Panc1 (cell line): ENCODE measurements at regions of chr3 and their contacts with region 1.

Region 1: GRCh38 chr3:185460719-185461350 is 38.0 kb downstream of the TMEM41A start:
- DNase-seq: peak; percentile 32
- ATAC-seq: peak; percentile 74
- H3K4me3 ChIP-seq: no peak overlapping the region
- H3K27ac ChIP-seq: no peak overlapping the region
- H3K4me1 ChIP-seq: no peaks in the 10 kb centered on the region
- H3K27me3 ChIP-seq: no peaks in the 10 kb centered on the region
- CTCF ChIP-seq: peak; percentile 75

Region 2: GRCh38 chr3:185362850-185363661 is 97.8 kb before region 1 on chr3 and contains the start of gene MAP3K13:
- CTCF ChIA-PET with region 1: no interaction called
- POLR2A ChIA-PET with region 1: interaction called, 10 read pairs
- in situ Hi-C with region 1: no loop called
- intact Hi-C with region 1: no loop called
- DNase-seq: no peak
- ATAC-seq: peak; percentile 98
- H3K4me3 ChIP-seq: peak within 1 kb of the TSS; percentile 44 to 63
- H3K27ac ChIP-seq: peak within 1 kb of the TSS; percentile 10; the same call in 1 of the 2 replicates
- H3K4me1 ChIP-seq: no peaks in the 10 kb centered on the region
- H3K27me3 ChIP-seq: peaks cover 4% of the 10 kb centered on the region; the same call in 1 of the 2 replicates
- CTCF ChIP-seq: no peak
- total RNA-seq, gene MAP3K13: 26.6 TPM

Region 3: DNA sequence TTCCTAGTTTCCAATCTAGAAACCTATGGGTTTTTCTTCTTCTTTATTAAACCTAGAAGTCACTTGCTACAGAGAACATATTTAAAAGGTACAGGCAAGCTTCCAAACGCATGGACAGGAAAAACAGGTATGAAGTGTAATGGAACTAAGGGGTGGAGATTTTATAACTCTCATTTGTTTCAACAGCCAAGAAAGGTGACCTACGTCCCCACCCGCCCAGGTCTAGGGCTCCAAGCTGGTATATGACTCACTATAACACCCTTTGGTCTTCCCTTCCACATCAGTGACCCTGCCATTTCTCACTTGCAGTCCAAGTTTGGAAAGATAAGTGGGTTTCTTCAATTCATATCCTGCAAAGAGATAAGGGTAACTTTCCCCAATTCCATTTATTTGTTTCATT is 97.6 kb after region 1 on chr3:
- CTCF ChIA-PET with region 1: interaction called, 13 read pairs
- POLR2A ChIA-PET with region 1: no interaction called
- in situ Hi-C with region 1: no loop called
- intact Hi-C with region 1: loop called (anchors 10 kb)
- DNase-seq: no peak
- ATAC-seq: no peak
- H3K4me3 ChIP-seq: no peak overlapping the region
- H3K27ac ChIP-seq: peak overlapping the region; percentile 67; the same call in 1 of the 2 replicates
- H3K4me1 ChIP-seq: peaks cover 36% of the 10 kb centered on the region
- H3K27me3 ChIP-seq: no peaks in the 10 kb centered on the region
- CTCF ChIP-seq: no peak

Region 4: DNA sequence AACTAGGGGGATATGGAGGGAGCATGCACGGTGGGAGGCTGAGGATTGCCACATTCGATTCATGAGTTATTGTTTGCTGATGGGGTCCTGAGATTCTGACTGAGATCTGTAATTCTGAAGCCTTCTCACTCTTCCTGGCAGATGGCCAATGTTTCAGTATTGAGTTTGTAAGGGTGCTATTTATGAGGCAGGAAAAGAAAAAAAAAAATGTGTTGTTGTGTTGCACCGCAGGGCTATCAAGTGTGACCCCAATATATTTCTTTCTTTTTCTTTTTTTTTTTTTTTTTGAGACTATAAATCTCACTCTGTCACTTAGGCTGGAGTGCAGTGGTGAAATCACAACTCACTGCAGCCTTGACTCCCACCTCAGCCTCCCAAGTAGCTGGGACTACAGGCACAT is 122.0 kb after region 1 on chr3:
- CTCF ChIA-PET with region 1: interaction called, 8 read pairs
- POLR2A ChIA-PET with region 1: interaction called, 7 read pairs
- in situ Hi-C with region 1: no loop called
- intact Hi-C with region 1: loop called (anchors 5 kb)
- DNase-seq: no peak
- ATAC-seq: no peak
- H3K4me3 ChIP-seq: no peak overlapping the region
- H3K27ac ChIP-seq: no peak overlapping the region
- H3K4me1 ChIP-seq: peaks cover 4% of the 10 kb centered on the region; the same call in 1 of the 2 replicates
- H3K27me3 ChIP-seq: no peaks in the 10 kb centered on the region
- CTCF ChIP-seq: no peak